Heart right ventricle (tissue), 16 donors: ENCODE measurements at regions of chr13 and their contacts with region 1.

Region 1: GRCh38 chr13:49996951-49997895 is at the start of gene TRIM13:
- DNase-seq: peak; percentile 91
- ATAC-seq: peak; percentile 87 to 95 (median 93)
- H3K4me3 ChIP-seq: peak within 1 kb of the TSS; percentile 61 to 99 (median 91)
- H3K27ac ChIP-seq: peak within 1 kb of the TSS; percentile 93 to 100 (median 99)
- H3K4me1 ChIP-seq: peaks cover 11 to 58% (median 48%) of the 10 kb centered on the region in 9 donors
- H3K27me3 ChIP-seq: no peaks in the 10 kb centered on the region
- CTCF ChIP-seq: peak; percentile 35 to 94 (median 80)
- total RNA-seq, gene TRIM13: 16.0 to 26.9 (median 19.1) TPM

Region 2: GRCh38 chr13:49367640-49368422 is 629.4 kb before region 1 on chr13:
- intact Hi-C with region 1: no loop called
- DNase-seq: no peak
- ATAC-seq: peak in 2 of 8 donors; percentile 24 to 57
- H3K4me3 ChIP-seq: no peak overlapping the region
- H3K27ac ChIP-seq: peak overlapping the region in 2 of 10 donors; percentile 21 to 53
- H3K4me1 ChIP-seq: peaks cover 0 to 20% (median 11%) of the 10 kb centered on the region in 9 donors
- H3K27me3 ChIP-seq: no peaks in the 10 kb centered on the region
- CTCF ChIP-seq: no peak

Region 3: DNA sequence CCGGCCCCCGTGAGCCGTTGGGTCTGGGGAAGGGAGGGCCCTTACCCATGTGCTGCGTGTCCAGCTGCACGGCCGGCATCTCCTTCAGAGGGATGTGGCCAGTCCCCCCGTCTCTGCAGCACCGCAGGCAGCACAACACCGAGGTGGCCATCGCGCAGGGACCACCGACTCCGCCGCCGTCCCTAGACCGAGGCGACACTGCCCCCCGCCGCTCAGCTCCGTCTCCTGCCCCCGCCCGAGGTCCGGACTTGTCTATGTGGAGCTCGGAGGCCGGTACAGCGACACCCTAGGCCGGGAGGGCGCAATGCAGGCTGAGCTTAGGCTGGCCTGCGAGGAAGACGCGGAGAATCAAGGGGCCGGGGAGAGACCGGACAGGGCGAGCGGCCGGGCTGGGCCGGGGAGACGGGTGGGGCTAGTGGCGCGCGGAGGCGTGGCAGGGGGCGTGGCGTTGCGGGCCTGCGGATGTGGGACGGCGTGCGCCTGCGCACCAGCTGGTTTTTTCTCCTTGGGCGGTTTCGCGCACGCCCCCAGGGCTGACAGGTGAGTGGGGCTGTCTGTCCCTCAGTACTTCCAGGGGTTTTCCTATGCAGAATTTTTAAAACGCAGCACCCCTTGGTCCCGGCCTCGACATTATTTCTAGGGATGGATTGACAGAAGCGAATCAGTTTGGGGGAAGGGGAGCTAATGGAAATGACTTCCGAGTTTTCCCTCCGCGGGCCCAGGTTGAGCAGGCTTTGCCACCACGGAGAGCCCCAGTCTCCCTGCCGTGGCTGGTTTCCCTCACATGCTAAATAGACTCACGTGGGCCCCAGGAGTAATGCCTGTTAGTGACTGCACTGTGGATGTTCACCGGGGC is 60.9 kb before region 1 on chr13 and contains the start of gene SPRYD7:
- intact Hi-C with region 1: loop called in 2 of 10 experiments (anchors 5 to 10 kb)
- DNase-seq: peak; percentile 97 to 99
- ATAC-seq: peak; percentile 99 to 100 (median 100)
- H3K4me3 ChIP-seq: peak within 1 kb of the TSS; percentile 62 to 94 (median 79)
- H3K27ac ChIP-seq: peak within 1 kb of the TSS; percentile 30 to 90 (median 83)
- H3K4me1 ChIP-seq: peaks cover 2 to 52% (median 38%) of the 10 kb centered on the region in 9 donors
- H3K27me3 ChIP-seq: no peaks in the 10 kb centered on the region
- CTCF ChIP-seq: peak; percentile 85 to 99 (median 92)
- total RNA-seq, gene SPRYD7: 10.0 to 14.4 (median 12.9) TPM

Region 4: DNA sequence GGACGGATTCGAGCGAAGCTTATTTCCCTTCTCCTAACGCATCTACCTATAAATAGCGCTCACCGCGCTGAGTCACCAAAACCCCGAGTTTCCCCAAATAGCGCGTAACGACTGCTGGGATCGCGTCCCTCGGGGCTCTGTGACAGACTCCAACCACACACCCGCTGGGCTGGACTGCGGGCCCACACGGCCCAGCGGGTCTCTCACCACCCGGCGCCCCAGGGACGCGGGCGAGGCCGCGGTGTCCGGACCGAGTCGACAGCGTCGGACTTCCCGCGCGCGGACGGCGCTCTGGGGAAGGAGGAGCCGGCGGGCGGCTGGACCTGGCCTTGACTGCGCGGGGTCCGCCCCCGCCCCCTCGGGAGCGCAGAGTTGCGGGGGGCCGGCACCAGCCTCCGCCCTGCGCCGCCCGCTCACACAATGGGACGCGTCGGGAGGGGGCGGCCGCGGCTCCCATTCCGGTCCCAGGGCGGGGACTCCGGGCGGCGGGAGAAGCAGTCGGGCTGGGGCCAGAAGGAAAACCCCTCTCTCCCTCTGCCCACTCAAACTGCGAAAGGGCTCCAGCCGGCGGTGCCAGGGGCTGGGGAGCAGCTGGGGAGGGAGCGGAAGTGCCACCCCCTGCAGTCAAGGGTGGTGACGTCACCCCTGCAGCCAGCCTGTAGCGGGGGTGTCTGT is 126.8 kb after region 1 on chr13:
- intact Hi-C with region 1: loop called in 6 of 10 experiments (anchors 2 to 10 kb)
- DNase-seq: peak; percentile 87 to 97
- ATAC-seq: peak; percentile 86 to 95 (median 92)
- H3K4me3 ChIP-seq: peak overlapping the region; percentile 51 to 98 (median 94)
- H3K27ac ChIP-seq: peak overlapping the region; percentile 94 to 100 (median 100)
- H3K4me1 ChIP-seq: peaks cover 2 to 70% (median 53%) of the 10 kb centered on the region in 9 donors
- H3K27me3 ChIP-seq: peaks cover 0 to 14% (median 5%) of the 10 kb centered on the region in 7 donors
- CTCF ChIP-seq: peak in 2 of 9 donors; percentile 23 to 43

Region 5: GRCh38 chr13:50208826-50209335 is 211.7 kb after region 1 on chr13:
- intact Hi-C with region 1: loop called in 1 of 10 experiments (anchors 10 kb)
- DNase-seq: peak; percentile 41 to 54
- ATAC-seq: peak; percentile 90 to 94 (median 92)
- H3K4me3 ChIP-seq: peak overlapping the region in 7 of 10 donors; percentile 2 to 38 (median 36)
- H3K27ac ChIP-seq: peak overlapping the region in 7 of 10 donors; percentile 36 to 80 (median 60)
- H3K4me1 ChIP-seq: peaks cover 0 to 19% (median 14%) of the 10 kb centered on the region in 9 donors
- H3K27me3 ChIP-seq: no peaks in the 10 kb centered on the region
- CTCF ChIP-seq: no peak

Region 6: DNA sequence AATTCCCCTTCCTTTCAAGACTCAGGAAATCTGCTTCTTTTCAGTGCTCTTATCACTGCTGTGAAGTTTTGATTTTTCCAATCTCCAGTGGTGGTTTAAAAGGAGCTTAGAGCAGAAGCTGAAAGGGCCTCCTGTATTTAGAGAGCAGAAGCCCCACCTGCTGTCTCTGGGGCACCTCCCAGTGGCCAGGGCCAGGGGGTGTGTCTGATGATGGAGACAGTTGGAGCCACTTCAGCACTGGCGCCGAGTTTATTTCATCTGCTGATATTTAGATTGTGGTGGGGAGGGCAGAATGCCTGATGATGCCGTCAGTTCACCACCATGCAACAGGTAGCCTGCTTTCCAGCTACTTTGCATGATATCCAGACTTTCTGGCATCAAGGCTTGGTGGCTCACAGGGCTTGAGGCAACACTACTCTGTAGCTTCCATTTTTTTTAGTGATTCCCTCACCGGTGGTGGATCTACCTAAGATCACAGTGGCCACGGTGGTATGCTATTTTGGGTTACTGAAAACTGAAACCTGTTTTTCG is 389.9 kb after region 1 on chr13:
- intact Hi-C with region 1: loop called in 1 of 10 experiments (anchors 10 kb)
- DNase-seq: peak; percentile 52 to 65
- ATAC-seq: peak; percentile 86 to 96 (median 94)
- H3K4me3 ChIP-seq: peak overlapping the region in 9 of 10 donors; percentile 4 to 43 (median 35)
- H3K27ac ChIP-seq: peak overlapping the region; percentile 5 to 83 (median 78)
- H3K4me1 ChIP-seq: peaks cover 0 to 34% (median 19%) of the 10 kb centered on the region in 9 donors
- H3K27me3 ChIP-seq: no peaks in the 10 kb centered on the region
- CTCF ChIP-seq: peak in 6 of 9 donors; percentile 27 to 54 (median 38)

Region 7: GRCh38 chr13:50474088-50474662 is 477.0 kb after region 1 on chr13:
- intact Hi-C with region 1: no loop called
- DNase-seq: no peak
- ATAC-seq: peak in 1 of 8 donors; percentile 24
- H3K4me3 ChIP-seq: no peak overlapping the region
- H3K27ac ChIP-seq: no peak overlapping the region
- H3K4me1 ChIP-seq: peaks cover 0 to 23% (median 14%) of the 10 kb centered on the region in 9 donors
- H3K27me3 ChIP-seq: no peaks in the 10 kb centered on the region
- CTCF ChIP-seq: no peak

Region 8: DNA sequence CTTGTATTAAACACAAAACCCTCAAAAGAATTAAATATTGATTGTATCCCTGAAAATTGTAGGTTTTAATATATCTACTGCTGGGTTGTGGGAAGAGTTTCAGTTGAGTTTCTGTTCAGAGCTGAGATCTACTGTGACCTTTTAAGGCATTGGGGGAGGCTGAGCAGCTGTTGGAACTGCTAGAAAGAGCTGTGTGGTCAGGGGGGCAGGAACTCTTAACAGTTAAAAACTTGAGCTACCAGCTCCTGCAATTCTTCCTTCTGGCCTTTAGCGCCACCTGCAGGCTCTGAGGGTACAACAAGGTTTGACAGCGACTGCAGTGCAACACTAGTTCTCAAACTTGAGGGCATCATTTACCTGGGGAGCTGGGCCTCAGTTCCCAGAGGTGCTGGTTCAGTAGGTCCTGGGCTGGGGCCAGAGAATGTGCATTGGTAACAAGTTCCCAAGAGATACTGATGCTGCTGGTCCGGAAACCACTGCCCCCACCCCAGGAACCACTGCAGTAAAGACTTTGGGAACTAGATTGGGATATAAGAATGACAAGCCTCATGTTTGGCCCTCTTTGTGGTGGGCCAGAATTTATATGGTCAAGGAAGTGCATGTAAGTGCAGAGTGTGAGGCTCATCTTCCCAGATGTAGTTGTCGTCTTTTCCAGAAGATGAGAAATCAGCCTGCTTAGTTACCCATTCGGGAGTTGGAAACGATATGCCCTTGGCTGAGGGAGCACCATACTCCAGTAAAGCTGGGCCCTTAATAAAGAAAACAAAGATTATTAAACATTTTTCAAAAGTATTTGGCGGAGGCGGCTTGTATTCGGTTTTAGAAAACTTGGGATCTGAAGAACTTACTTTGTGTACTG is 914.9 kb after region 1 on chr13:
- intact Hi-C with region 1: loop called in 1 of 10 experiments (anchors 5 kb)
- DNase-seq: peak; percentile 87 to 89
- ATAC-seq: peak in 7 of 8 donors; percentile 14 to 69 (median 49)
- H3K4me3 ChIP-seq: peak overlapping the region in 1 of 10 donors; percentile 86
- H3K27ac ChIP-seq: peak overlapping the region in 6 of 10 donors; percentile 20 to 96 (median 69)
- H3K4me1 ChIP-seq: peaks cover 8 to 75% (median 56%) of the 10 kb centered on the region in 9 donors
- H3K27me3 ChIP-seq: no peaks in the 10 kb centered on the region
- CTCF ChIP-seq: peak; percentile 65 to 91 (median 87)